ENCODE measurements at regions of chr7 and their contacts with region 1.

Region 1: GRCh38 chr7:111735661-111736551 is 173.6 kb upstream of the IMMP2L start:
- DNase-seq: peak; percentile 43
- H3K4me3 ChIP-seq: no peak overlapping the region
- H3K27ac ChIP-seq: no peak overlapping the region
- H3K27me3 ChIP-seq: no peaks in the 10 kb centered on the region
- CTCF ChIP-seq: peak; percentile 80

Region 2: GRCh38 chr7:111718886-111719285 is 17.0 kb before region 1 on chr7:
- CTCF ChIA-PET with region 1: interaction called, 11 read pairs
- POLR2A ChIA-PET with region 1: no interaction called
- DNase-seq: no peak
- H3K4me3 ChIP-seq: no peak overlapping the region
- H3K27ac ChIP-seq: no peak overlapping the region
- H3K27me3 ChIP-seq: no peaks in the 10 kb centered on the region
- CTCF ChIP-seq: no peak